Endothelial cell of umbilical vein (primary cell): ENCODE measurements at regions of chr16 and their contacts with region 1.

Region 1: DNA sequence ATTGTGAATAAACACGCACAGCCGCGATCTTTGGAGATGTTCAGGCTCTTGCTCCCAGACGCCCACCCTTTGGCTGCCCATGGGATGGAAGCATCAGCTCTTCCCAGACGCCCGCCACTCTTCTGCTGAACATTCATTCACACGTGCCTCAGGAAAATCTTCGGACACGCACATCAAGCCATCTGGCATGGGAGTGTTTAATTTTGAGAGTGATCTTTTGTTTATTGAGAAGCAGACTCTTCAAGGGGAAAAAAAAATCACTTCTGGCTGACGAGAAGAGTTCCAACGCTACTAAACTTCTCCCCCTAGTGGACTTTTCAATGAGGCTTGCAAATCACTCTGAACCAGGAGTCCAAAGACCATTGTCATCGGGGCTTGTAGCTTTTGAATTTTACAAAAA is 62.0 kb upstream of the NUDT7 start:
- DNase-seq: peak; percentile 81
- H3K4me3 ChIP-seq: no peak overlapping the region
- H3K27ac ChIP-seq: peak overlapping the region; percentile 40
- H3K4me1 ChIP-seq: peaks cover 10% of the 10 kb centered on the region
- H3K27me3 ChIP-seq: no peaks in the 10 kb centered on the region
- CTCF ChIP-seq: peak; percentile 65 to 68
- POLR2A ChIP-seq: no peak

Region 2: GRCh38 chr16:77406677-77407076 is 253.6 kb before region 1 on chr16:
- CTCF ChIA-PET with region 1: interaction called, 4 read pairs
- POLR2A ChIA-PET with region 1: no interaction called
- dilution Hi-C with region 1: no loop called
- intact Hi-C with region 1: loop called (anchors 1 kb)
- DNase-seq: peak; percentile 32
- H3K4me3 ChIP-seq: no peak overlapping the region
- H3K27ac ChIP-seq: no peak overlapping the region
- H3K4me1 ChIP-seq: peaks cover 25% of the 10 kb centered on the region
- H3K27me3 ChIP-seq: no peaks in the 10 kb centered on the region
- CTCF ChIP-seq: peak; percentile 26 to 28
- POLR2A ChIP-seq: no peak

Region 3: DNA sequence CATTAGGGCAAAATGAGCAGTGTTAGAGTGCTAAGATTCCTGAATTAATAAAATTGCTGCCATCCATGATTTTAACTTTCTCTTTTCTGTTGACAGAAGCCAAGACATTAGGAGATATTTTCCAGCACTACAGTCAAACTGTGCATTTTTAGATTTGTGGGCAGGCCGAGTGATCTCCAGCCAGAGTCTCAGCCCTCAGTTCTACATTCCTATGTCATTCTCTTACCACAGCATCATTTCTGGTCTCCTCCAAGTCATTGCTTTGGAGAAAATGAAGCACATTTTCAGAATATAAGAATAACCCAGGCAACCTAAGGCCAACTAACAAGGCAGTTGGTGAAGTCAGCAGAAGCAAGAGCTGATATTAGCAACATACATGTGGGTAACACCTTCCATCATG is 12.6 kb before region 1 on chr16:
- CTCF ChIA-PET with region 1: interaction called, 13 read pairs
- POLR2A ChIA-PET with region 1: no interaction called
- dilution Hi-C with region 1: no loop called
- intact Hi-C with region 1: no loop called
- DNase-seq: no peak
- H3K4me3 ChIP-seq: no peak overlapping the region
- H3K27ac ChIP-seq: no peak overlapping the region
- H3K4me1 ChIP-seq: no peaks in the 10 kb centered on the region
- H3K27me3 ChIP-seq: peaks cover 3 to 7% of the 10 kb centered on the region in 2 experiments
- CTCF ChIP-seq: no peak
- POLR2A ChIP-seq: no peak

Region 4: GRCh38 chr16:77788181-77789084 is 128.1 kb after region 1 on chr16 and contains the start of gene VAT1L:
- CTCF ChIA-PET with region 1: no interaction called
- POLR2A ChIA-PET with region 1: no interaction called
- dilution Hi-C with region 1: no loop called
- intact Hi-C with region 1: no loop called
- DNase-seq: peak; percentile 54
- H3K4me3 ChIP-seq: peak within 1 kb of the TSS; percentile 41 to 61 (median 50)
- H3K27ac ChIP-seq: no peak within 1 kb of the TSS
- H3K4me1 ChIP-seq: peaks cover 4% of the 10 kb centered on the region
- H3K27me3 ChIP-seq: peaks cover 28 to 41% of the 10 kb centered on the region in 2 experiments
- CTCF ChIP-seq: no peak
- POLR2A ChIP-seq: no peak
- total RNA-seq, gene VAT1L: 1.5 and 2.1 TPM in 2 replicates